H1 (cell line): ENCODE measurements at regions of chr3 and their contacts with region 1.

Region 1: GRCh38 chr3:52779011-52779836 is 1.8 kb downstream of the ITIH1 start:
- DNase-seq: no peak
- H3K4me3 ChIP-seq: no peak overlapping the region
- H3K27ac ChIP-seq: no peak overlapping the region
- H3K4me1 ChIP-seq: peaks cover 0 to 8% (median 0%) of the 10 kb centered on the region in 4 experiments; a peak in 1 of 7 replicates
- H3K27me3 ChIP-seq: no peaks in the 10 kb centered on the region; a peak in 1 of 7 replicates
- CTCF ChIP-seq: no peak
- EP300 ChIP-seq: no peak
- POLR2A ChIP-seq: no peak
- RAD21 ChIP-seq: no peak

Region 2: GRCh38 chr3:52533623-52534280 is 245.5 kb before region 1 on chr3 and contains the start of gene NT5DC2:
- CTCF ChIA-PET with region 1: no interaction called
- POLR2A ChIA-PET with region 1: no interaction called
- DNase-seq: peak in 1 of 2 experiments; percentile 85
- H3K4me3 ChIP-seq: peak within 1 kb of the TSS; percentile 65 to 84 (median 68)
- H3K27ac ChIP-seq: 0 out of 2 replicates have a peak within 1 kb of the TSS, but pooled peaks have one; percentile 22
- H3K4me1 ChIP-seq: peaks cover 7 to 33% (median 19%) of the 10 kb centered on the region in 4 experiments
- H3K27me3 ChIP-seq: no peaks in the 10 kb centered on the region
- CTCF ChIP-seq: peak in 1 of 3 experiments; percentile 2; a peak in 1 of 4 replicates
- EP300 ChIP-seq: no peak
- POLR2A ChIP-seq: no peak; a peak in 1 of 3 replicates
- RAD21 ChIP-seq: no peak
- total RNA-seq, gene NT5DC2: 331 and 367 TPM in 2 replicates

Region 3: GRCh38 chr3:52792961-52793695 is 13.9 kb after region 1 on chr3:
- CTCF ChIA-PET with region 1: interaction called, 28 read pairs
- POLR2A ChIA-PET with region 1: interaction called, 5 read pairs
- DNase-seq: no peak
- H3K4me3 ChIP-seq: no peak overlapping the region
- H3K27ac ChIP-seq: no peak overlapping the region
- H3K4me1 ChIP-seq: no peaks in the 10 kb centered on the region
- H3K27me3 ChIP-seq: no peaks in the 10 kb centered on the region
- CTCF ChIP-seq: no peak
- EP300 ChIP-seq: no peak
- POLR2A ChIP-seq: no peak
- RAD21 ChIP-seq: no peak